Tibial artery (tissue), 4 donors: ENCODE measurements at regions of chr3 and their contacts with region 1.

Region 1: DNA sequence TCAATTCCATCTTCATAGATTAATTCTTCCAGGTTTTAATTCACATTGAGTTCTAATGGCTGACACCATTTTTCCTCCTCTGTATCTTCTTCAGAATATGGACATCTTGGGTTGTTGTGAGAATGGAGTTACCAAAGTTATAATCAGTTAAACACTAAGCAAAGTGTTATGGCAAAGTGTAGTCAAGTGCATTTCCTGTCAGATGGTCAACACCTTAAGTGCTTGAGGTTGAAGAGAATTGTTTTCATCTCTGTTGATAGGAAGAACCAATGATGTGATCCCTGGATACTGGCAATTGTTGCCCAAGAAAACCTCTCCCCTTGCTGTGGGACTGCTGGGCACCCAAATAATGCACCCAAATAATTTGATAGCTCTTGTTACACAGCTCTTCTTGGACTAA is 102.6 kb upstream of the SATB1 start:
- DNase-seq: no peak
- H3K4me3 ChIP-seq: no peak overlapping the region
- H3K27ac ChIP-seq: no peak overlapping the region
- H3K4me1 ChIP-seq: no peaks in the 10 kb centered on the region
- H3K27me3 ChIP-seq: no peaks in the 10 kb centered on the region
- CTCF ChIP-seq: no peak

Region 2: GRCh38 chr3:19464663-19465062 is 937.0 kb after region 1 on chr3:
- intact Hi-C with region 1: loop called (anchors 5 kb)
- DNase-seq: no peak
- H3K4me3 ChIP-seq: no peak overlapping the region
- H3K27ac ChIP-seq: no peak overlapping the region
- H3K4me1 ChIP-seq: peaks cover 0 to 6% (median 2%) of the 10 kb centered on the region in 4 donors
- H3K27me3 ChIP-seq: no peaks in the 10 kb centered on the region
- CTCF ChIP-seq: no peak